ENCODE measurements at regions of chr5 and their contacts with region 1.

Region 1: DNA sequence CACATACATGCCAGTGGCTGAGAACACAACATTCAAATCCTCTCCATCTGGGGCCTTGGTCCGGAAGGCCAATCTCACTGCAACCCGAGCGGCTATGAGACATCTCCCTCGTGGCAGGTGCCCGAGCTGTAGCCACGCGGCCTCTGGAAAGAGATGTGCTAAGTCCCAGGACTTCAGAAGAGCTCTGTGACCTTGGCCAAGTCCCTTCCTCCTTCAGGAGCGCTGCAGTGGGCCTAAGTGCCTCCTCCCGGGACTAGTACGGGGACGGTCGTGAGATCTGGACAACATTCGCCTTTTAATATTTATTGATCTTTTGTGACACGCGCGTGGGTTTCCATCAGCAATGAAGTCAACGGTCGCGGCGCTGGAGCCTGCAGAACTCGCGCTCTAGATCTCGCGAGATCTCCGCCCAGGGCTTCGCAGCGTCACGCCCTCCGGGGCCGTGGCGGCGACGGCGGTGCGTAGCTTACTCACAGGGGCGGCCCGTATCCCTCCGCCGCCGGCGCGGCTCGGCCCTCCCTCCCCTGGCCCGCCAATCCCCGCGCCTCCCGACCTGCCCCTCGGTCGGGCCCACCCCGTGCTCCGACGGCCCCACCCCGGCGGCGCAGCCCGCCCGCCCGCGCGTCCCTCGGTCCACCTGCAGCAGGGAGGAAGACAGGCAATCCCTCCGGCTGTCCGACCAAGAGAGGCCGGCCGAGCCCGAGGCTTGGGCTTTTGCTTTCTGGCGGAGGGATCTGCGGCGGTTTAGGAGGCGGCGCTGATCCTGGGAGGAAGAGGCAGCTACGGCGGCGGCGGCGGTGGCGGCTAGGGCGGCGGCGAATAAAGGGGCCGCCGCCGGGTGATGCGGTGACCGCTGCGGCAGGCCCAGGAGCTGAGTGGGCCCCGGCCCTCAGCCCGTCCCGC is at the start of gene UBE2D2:
- DNase-seq: peak; percentile 91 to 97 (median 96)
- H3K4me3 ChIP-seq: peak within 1 kb of the TSS; percentile 66 to 100 (median 93)
- H3K27ac ChIP-seq: peak within 1 kb of the TSS; percentile 77 to 99 (median 97)
- H3K27me3 ChIP-seq: no peaks in the 10 kb centered on the region
- CTCF ChIP-seq: peak in 40 of 56 donors; percentile 2 to 64 (median 30)
- total RNA-seq, gene UBE2D2: 71.6 to 161 (median 119) TPM

Region 2: DNA sequence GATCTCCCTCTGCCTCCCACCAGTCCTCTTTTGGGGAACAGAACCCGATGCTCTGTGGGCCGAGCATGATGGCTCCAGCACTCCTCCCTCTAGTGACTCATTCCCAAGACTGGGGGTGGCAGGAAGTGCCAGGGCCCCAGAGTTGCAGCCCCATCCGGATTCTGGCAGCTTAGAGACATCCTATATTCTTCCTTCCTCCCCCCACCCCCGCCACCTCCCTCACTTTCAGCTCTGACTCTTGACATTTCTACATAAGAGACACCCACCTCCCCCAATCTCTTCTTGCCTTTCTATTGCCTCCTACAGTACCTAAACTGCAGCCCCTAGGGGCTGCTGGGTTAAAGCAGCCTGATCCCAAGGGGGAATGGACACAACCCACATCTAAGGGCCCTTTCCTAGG is 314.6 kb before region 1 on chr5:
- intact Hi-C with region 1: no loop called
- DNase-seq: peak in 4 of 10 donors; percentile 36 to 68 (median 46)
- H3K4me3 ChIP-seq: no peak overlapping the region
- H3K27ac ChIP-seq: peak overlapping the region in 1 of 59 donors; percentile 42
- H3K27me3 ChIP-seq: no peaks in the 10 kb centered on the region
- CTCF ChIP-seq: no peak

Region 3: DNA sequence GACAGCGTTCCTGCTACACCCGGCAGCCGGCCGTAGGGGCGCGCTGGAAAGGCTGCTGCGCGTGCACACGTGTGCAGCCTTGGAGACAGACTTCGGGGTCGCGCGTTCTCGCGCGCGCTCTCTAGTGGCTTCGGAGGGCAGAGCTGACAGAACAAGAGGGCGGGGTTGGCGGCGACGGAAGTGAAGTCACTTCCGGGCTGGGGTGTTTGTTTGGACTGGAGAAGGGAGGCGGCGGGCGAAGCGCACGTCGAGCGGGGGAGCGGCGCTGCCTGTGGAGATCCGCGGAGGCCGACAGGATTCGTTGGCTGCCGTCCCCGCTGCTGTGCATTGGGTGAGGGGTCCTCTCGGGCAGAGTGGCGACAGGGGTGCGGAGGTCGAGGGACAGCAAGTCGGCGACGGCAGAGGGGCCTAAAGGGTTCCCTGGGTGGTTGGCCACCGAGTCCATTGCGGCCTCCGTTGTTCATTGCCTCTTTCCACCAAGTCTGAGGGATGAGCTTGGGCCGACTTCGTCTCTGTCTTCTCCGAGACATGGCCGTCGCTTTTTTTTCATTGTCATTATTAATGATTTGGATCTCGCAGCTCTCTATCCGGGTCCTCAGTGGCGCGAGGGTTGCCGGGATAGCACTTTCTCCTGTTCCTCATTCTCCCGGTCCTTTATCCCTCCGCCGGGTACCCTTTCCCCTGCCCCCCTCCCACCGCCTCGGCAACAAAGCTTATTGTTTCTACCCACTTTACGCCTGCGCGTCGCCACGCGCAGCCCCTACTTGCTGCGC is 219.2 kb before region 1 on chr5 and contains the start of gene PAIP2:
- intact Hi-C with region 1: loop called in 1 of 2 experiments (anchors 5 kb)
- DNase-seq: peak; percentile 95 to 98 (median 97)
- H3K4me3 ChIP-seq: peak within 1 kb of the TSS; percentile 71 to 100 (median 97)
- H3K27ac ChIP-seq: peak within 1 kb of the TSS; percentile 94 to 100 (median 100)
- H3K27me3 ChIP-seq: no peaks in the 10 kb centered on the region
- CTCF ChIP-seq: peak; percentile 49 to 95 (median 86)
- total RNA-seq, gene PAIP2: 80.8 to 201 (median 156) TPM

Region 4: DNA sequence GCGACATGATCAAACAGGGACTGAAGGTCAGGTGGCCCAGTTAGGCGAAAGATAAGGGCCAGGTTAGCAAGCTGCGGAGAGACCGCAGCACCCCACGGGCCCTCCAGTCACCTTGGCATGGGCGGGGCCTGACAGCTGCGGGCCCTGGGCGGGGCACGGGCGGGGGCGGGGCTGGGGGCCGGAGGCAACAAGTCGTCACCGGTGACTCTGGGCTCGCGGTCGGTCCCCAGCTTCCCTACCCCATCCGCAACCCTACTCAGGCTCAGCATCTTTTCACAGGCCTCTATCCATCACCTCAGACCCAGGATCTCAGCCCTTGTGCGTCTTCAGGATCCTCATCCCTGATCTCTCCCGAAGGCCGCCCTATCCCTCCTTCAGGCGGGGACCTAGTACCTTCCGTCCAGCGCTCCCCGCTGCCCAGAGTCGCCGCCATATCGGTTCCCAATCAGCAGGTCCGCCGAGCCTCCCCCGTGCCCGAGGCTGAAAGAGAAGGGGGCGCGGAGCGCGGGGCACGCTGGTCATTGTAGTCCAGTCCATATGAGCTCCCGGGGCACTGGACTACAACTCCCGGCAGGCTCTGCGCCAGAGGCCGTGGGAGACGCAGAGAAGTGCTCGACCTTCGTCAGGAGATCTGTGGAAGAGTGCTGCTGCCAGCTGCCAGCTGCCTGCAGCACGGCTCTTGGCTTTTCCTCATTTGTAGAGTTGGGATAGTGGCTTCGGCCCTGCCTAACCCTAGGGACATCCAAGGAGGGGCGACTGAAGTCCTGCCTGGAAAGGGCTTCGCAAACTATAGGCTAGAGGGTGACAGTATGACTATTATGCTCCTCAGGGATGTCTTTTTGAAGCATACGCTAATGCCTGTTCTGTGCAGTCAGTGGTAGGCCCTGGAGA is 121.7 kb before region 1 on chr5 and contains the start of gene DNAJC18:
- intact Hi-C with region 1: loop called in 1 of 2 experiments (anchors 5 kb)
- DNase-seq: peak; percentile 97 to 99 (median 98)
- H3K4me3 ChIP-seq: peak within 1 kb of the TSS; percentile 61 to 99 (median 92)
- H3K27ac ChIP-seq: peak within 1 kb of the TSS; percentile 76 to 99 (median 97)
- H3K27me3 ChIP-seq: no peaks in the 10 kb centered on the region
- CTCF ChIP-seq: peak in 40 of 56 donors; percentile 5 to 59 (median 27)
- total RNA-seq, gene DNAJC18: 26.6 to 69.5 (median 49.7) TPM

Region 5: DNA sequence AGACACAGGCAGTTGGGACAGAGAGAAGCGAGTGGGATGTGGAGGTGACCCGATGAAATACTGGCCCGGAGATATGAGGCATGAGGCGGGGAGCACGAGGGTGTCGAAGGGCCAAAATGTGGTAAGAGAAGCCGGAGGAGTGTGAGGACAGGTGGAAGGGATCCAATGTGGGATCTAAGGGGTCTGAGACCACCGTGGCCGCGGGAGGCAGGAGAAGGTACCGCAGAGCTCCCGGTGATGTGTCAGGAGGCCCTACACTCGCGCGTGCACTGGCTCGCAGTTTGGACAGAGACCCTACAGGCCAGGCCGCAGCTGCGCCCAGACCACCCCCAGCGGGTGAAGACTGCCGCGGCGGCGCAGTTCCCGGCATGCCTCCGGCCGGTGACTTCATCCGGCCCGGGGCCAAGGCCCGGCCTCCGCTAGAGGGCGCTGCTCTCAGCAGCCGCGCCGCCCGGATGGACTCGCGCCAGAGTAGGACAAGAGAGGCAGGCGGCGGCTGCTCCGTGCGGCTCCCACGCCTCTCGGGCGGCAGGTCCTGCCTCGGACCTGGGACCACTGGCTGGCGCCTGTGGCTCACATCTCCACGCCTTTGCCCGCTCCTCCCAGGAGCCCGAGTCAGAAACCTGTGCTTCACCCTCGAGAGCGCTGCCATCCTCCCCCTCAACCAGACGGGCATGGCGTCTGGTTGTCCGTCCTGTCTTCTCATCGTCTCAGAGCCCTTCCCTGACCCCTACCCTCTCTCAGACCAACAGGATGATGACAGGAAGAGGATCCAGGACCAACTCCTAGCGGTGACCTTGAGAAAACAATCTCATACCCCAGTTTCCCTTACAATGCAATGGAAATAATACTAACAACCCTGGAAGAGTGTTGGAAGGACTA is 43.1 kb before region 1 on chr5:
- intact Hi-C with region 1: loop called (anchors 5 kb)
- DNase-seq: peak; percentile 86 to 93 (median 90)
- H3K4me3 ChIP-seq: peak overlapping the region; percentile 43 to 87 (median 67)
- H3K27ac ChIP-seq: peak overlapping the region; percentile 73 to 99 (median 95)
- H3K27me3 ChIP-seq: no peaks in the 10 kb centered on the region
- CTCF ChIP-seq: peak; percentile 87 to 99 (median 97)

Region 6: DNA sequence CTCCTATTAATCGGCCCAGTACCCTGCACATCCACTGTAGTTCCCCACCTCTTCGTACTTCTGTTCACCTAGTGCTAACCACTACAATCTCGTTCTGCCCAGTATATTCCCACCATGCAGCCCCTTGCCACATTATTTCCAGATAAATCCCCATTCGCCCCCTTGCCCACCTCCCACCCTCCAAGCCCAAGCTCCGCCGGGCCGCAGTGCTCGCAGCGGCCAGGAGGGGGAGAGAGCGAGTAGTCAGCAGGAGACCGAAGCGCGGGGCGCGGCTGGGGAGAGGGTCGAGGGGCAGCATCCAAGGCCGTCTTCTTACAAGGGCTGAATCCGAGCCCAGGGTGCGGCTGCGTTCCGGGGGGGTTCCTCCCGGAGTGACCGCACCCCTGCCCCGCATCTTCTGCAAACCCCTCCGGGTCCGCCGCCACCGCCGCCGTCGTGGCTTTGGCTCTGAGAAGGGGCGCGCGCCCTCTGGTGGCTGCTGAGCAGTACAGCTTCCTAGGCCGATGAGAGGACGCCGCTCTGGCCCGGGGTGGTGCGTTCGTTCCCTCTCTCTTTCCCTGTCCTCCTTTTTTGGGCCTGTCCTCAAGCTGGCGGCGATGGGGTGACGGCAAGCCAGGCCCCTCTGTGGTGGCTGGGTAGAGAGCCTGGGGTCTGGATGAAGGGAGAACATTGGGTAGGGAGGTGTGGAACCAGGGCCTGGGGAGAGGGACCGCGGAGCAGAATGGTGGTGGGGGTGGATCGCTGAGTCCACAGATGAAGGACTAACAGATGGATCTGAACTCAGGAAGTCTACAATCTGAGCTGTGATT is 204.6 kb after region 1 on chr5:
- intact Hi-C with region 1: loop called in 1 of 2 experiments (anchors 10 kb)
- DNase-seq: peak in 9 of 10 donors; percentile 68 to 83 (median 78)
- H3K4me3 ChIP-seq: peak overlapping the region; percentile 43 to 84 (median 63)
- H3K27ac ChIP-seq: peak overlapping the region; percentile 66 to 96 (median 92)
- H3K27me3 ChIP-seq: no peaks in the 10 kb centered on the region
- CTCF ChIP-seq: peak; percentile 85 to 100 (median 99)

Region 7: DNA sequence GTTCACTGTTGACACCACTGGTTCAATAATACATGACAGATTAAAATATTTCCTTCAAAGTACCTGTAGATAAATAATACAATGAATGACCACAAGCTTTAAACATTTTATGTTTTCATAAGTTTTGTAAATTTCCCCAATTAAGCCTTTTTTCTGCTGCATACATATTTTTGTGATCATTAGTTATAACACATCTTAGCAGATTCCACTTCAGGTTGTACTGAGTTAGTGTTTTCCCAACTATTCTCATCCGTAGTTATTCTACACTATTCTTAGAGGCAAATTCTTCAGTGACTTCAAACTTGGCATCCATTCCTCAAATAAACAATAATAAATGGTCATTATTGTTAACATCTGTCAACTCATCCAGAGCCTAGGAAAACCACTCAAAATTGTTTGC is 381.2 kb after region 1 on chr5:
- intact Hi-C with region 1: no loop called
- DNase-seq: no peak
- H3K4me3 ChIP-seq: no peak overlapping the region
- H3K27ac ChIP-seq: no peak overlapping the region
- H3K27me3 ChIP-seq: no peaks in the 10 kb centered on the region
- CTCF ChIP-seq: no peak

Region 8: GRCh38 chr5:140042643-140043500 is 481.9 kb after region 1 on chr5 and contains the start of gene NRG2:
- intact Hi-C with region 1: loop called in 1 of 2 experiments (anchors 5 kb)
- DNase-seq: peak; percentile 62 to 89 (median 75)
- H3K4me3 ChIP-seq: peak within 1 kb of the TSS; percentile 52 to 88 (median 80)
- H3K27ac ChIP-seq: peak within 1 kb of the TSS; percentile 41 to 94 (median 85)
- H3K27me3 ChIP-seq: no peaks in the 10 kb centered on the region
- CTCF ChIP-seq: peak in 52 of 56 donors; percentile 27 to 77 (median 59)
- total RNA-seq, gene NRG2: 5.8 to 21.5 (median 11.8) TPM